ENCODE measurements at regions of chr6 and their contacts with region 1.

Region 1: DNA sequence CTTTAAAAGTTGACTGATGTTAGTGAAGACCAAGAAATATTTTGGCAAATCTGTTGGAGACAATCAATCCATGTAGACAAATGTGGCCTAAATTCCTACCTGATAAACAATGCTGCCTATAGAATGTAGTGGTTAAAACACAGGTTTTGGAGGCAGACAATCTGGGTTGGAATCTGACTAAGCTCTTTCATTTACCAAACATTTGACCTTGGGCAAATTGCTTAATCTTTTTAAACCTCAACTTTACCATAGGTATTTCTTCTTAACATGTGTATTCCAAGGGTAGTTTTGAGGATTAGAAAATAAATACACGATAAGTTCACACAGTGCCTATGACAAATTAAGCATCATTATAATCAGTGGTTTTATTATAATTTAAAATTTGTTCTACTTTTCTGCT is 11.5 kb downstream of the RHAG start:
- DNase-seq: no peak
- ATAC-seq: no peak
- H3K4me3 ChIP-seq: no peak overlapping the region
- H3K27ac ChIP-seq: no peak overlapping the region
- H3K4me1 ChIP-seq: no peaks in the 10 kb centered on the region
- H3K27me3 ChIP-seq: no peaks in the 10 kb centered on the region
- CTCF ChIP-seq: no peak

Region 2: DNA sequence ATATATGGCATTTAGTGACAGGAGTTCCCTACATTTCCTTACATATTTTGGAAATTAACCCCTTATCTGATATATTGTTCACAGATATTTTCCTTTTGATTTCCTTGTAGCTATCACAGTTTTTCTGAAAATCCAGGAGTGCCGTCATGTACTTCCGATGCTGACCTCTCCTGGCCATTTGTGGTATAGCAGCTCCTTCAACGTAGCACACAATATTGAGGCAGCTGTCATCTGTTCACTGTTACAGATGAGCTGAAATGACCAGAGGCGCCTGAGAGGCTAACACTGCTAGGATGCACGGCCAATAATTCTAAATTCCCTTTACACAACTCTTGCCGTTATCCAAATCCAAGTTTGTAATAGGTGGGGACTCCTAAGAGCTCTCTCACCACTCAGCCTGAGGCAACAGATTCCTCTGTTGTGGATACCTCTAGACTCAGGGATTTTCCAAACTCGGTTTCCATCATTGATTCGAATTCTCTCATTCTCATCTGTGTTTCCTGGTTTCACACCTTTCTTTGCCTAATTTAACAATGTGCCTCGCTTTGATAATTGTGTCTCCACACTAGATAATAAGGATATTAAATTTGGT is 215.1 kb before region 1 on chr6:
- intact Hi-C with region 1: no loop called
- DNase-seq: peak; percentile 48
- ATAC-seq: peak; percentile 88
- H3K4me3 ChIP-seq: no peak overlapping the region
- H3K27ac ChIP-seq: no peak overlapping the region
- H3K4me1 ChIP-seq: no peaks in the 10 kb centered on the region
- H3K27me3 ChIP-seq: no peaks in the 10 kb centered on the region
- CTCF ChIP-seq: peak; percentile 87

Region 3: GRCh38 chr6:49849213-49849907 is 224.2 kb after region 1 on chr6:
- intact Hi-C with region 1: loop called (anchors 5 kb)
- DNase-seq: no peak
- ATAC-seq: peak; percentile 75
- H3K4me3 ChIP-seq: no peak overlapping the region
- H3K27ac ChIP-seq: no peak overlapping the region
- H3K4me1 ChIP-seq: no peaks in the 10 kb centered on the region
- H3K27me3 ChIP-seq: no peaks in the 10 kb centered on the region
- CTCF ChIP-seq: peak; percentile 70

Measured in upper lobe of right lung (tissue), 1 donor.